ENCODE measurements at regions of chr22 and their contacts with region 1.

Region 1: DNA sequence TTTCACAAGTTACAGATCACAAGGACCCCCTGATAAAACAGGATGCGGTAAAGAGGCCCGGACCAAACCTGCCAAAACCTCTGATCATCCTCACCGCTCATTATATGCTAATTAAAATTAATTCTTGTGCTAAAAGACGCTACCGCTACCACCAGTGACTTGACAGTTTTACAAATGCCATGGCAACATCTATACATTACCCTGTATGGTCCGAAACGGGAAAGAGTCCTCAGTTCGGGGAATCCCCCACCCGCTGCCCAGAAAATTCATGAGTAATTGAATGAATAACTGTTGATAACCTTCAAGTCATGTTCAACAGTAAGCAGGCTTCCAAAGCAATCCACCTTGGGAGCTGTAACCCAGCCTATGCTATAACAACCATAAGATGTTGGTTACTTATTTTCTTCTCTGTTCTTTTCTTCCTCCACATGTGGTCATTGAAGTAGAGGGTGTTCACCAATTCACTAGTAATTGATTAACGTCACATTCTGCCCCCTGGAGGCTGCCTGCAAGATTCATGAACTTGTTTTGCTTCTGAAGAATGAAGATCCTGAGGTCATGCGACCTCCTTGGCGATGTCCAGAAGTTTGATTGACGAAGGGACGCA is 20.6 kb downstream of the APOBEC3H start:
- DNase-seq: peak; percentile 87
- H3K4me3 Mint-ChIP-seq: no peak overlapping the region
- H3K27ac Mint-ChIP-seq: peak overlapping the region; percentile 57
- H3K4me1 Mint-ChIP-seq: peaks cover 49% of the 10 kb centered on the region
- H3K27me3 Mint-ChIP-seq: no peaks in the 10 kb centered on the region

Region 2: DNA sequence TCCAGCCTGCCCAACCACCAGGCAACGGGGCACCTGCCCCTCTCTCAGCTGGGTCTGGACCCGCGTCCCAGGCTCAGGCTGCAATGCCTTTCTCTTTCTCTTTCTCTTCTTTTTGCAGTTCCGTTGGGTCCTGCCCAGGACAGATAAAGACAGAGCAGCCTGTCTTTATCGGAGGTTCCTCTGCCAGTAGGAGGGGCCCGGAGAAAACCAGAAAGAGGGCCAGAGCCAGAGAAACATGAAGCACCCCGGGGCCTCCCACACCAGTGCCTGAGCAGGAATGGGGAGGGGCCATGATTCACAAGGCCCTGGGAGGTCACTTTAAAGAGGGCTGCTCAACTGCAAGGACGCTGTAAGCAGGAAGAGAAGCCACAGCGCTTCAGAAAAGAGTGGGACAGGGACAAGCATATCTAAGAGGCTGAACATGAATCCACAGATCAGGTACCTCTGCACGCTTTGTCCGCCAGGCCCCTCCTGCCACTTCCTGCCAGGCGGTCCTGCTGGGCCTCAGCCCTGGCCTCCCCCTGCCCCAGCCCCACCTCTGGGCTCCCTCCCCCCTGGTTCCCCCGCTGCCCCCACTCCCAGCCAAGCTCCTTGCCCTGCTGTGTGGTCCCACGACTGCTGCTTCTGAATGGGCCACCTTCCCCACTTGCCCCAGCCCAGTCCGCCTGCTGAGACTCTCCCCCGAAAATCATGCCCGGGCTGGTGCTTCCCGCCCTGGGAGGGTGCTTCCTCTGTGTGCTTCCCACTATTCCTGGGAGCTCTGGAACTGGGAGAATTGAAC is 103.6 kb before region 1 on chr22 and contains the start of gene APOBEC3C:
- CTCF ChIA-PET with region 1: interaction called, 11 read pairs
- DNase-seq: peak; percentile 92
- H3K4me3 Mint-ChIP-seq: peak within 1 kb of the TSS; percentile 98
- H3K27ac Mint-ChIP-seq: peak within 1 kb of the TSS; percentile 90
- H3K4me1 Mint-ChIP-seq: peaks cover 60% of the 10 kb centered on the region
- H3K27me3 Mint-ChIP-seq: peaks cover 4% of the 10 kb centered on the region